ENCODE measurements at regions of chr17 and their contacts with region 1.

Region 1: GRCh38 chr17:77451245-77451893 is 310.6 kb downstream of the SEC14L1 start:
- DNase-seq: peak; percentile 75 to 84 (median 84)
- ATAC-seq: peak; percentile 82
- H3K4me3 ChIP-seq: peak overlapping the region; percentile 41
- H3K27ac ChIP-seq: peak overlapping the region; percentile 71
- H3K4me1 ChIP-seq: peaks cover 62 to 73% of the 10 kb centered on the region in 2 experiments
- H3K27me3 ChIP-seq: no peaks in the 10 kb centered on the region
- CTCF ChIP-seq: no peak
- EP300 ChIP-seq: no peak
- POLR2A ChIP-seq: peak; percentile 46
- RAD21 ChIP-seq: no peak

Region 2: DNA sequence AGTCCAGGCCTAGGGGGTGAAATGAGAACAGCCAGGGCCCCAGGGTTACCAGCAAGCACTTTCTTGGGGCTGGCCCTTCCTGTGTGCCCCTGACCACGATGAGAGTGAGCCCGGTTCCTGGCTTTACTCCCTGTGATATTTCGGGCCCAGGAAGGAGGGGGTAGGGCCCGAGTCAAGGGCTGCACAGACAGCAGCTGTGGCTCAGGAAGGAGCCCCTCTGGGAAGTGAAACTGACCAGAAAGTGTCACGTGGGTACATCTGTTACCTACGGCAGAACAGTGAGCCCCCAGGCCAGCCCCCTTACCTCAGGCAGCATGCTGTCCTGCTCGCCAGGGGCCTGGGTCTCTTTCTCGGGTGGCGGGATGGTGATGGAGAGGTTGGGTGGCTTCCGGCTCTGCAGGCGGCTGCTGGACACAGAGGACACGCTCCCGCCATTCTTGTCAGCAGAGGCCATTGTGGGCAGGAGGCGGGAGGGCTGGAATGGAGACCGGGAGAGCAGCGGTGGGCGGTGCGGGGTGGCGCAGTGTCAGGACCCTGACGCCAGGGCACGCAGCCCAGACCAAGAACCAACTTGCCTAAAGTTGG is 970.2 kb before region 1 on chr17:
- CTCF ChIA-PET with region 1: no interaction called
- POLR2A ChIA-PET with region 1: no interaction called
- in situ Hi-C with region 1: no loop called
- intact Hi-C with region 1: no loop called
- DNase-seq: no peak
- ATAC-seq: no peak
- H3K4me3 ChIP-seq: no peak overlapping the region
- H3K27ac ChIP-seq: no peak overlapping the region
- H3K4me1 ChIP-seq: peaks cover 7 to 24% of the 10 kb centered on the region in 2 experiments; a peak in 4 of 5 replicates
- H3K27me3 ChIP-seq: peaks cover 0 to 20% of the 10 kb centered on the region in 2 experiments; a peak in 3 of 5 replicates
- CTCF ChIP-seq: no peak
- EP300 ChIP-seq: no peak
- POLR2A ChIP-seq: no peak
- RAD21 ChIP-seq: no peak

Region 3: GRCh38 chr17:77391668-77392375 is 59.5 kb before region 1 on chr17:
- CTCF ChIA-PET with region 1: no interaction called
- POLR2A ChIA-PET with region 1: no interaction called
- in situ Hi-C with region 1: no loop called
- intact Hi-C with region 1: no loop called
- DNase-seq: peak in 1 of 4 experiments; percentile 15
- ATAC-seq: peak; percentile 16
- H3K4me3 ChIP-seq: no peak overlapping the region
- H3K27ac ChIP-seq: no peak overlapping the region
- H3K4me1 ChIP-seq: peaks cover 40 to 57% of the 10 kb centered on the region in 2 experiments
- H3K27me3 ChIP-seq: no peaks in the 10 kb centered on the region
- CTCF ChIP-seq: no peak
- EP300 ChIP-seq: no peak
- POLR2A ChIP-seq: no peak
- RAD21 ChIP-seq: no peak

Region 4: GRCh38 chr17:77441130-77441920 is 10.0 kb before region 1 on chr17:
- CTCF ChIA-PET with region 1: no interaction called
- POLR2A ChIA-PET with region 1: interaction called, 11 read pairs
- in situ Hi-C with region 1: no loop called
- intact Hi-C with region 1: no loop called
- DNase-seq: no peak
- ATAC-seq: no peak
- H3K4me3 ChIP-seq: no peak overlapping the region
- H3K27ac ChIP-seq: no peak overlapping the region
- H3K4me1 ChIP-seq: peaks cover 55 to 65% of the 10 kb centered on the region in 2 experiments
- H3K27me3 ChIP-seq: no peaks in the 10 kb centered on the region
- CTCF ChIP-seq: no peak
- EP300 ChIP-seq: no peak
- POLR2A ChIP-seq: no peak
- RAD21 ChIP-seq: no peak

Measured in K562 (cell line).